Transverse colon (tissue), 4 donors: ENCODE measurements at regions of chr16 and their contacts with region 1.

Region 1: DNA sequence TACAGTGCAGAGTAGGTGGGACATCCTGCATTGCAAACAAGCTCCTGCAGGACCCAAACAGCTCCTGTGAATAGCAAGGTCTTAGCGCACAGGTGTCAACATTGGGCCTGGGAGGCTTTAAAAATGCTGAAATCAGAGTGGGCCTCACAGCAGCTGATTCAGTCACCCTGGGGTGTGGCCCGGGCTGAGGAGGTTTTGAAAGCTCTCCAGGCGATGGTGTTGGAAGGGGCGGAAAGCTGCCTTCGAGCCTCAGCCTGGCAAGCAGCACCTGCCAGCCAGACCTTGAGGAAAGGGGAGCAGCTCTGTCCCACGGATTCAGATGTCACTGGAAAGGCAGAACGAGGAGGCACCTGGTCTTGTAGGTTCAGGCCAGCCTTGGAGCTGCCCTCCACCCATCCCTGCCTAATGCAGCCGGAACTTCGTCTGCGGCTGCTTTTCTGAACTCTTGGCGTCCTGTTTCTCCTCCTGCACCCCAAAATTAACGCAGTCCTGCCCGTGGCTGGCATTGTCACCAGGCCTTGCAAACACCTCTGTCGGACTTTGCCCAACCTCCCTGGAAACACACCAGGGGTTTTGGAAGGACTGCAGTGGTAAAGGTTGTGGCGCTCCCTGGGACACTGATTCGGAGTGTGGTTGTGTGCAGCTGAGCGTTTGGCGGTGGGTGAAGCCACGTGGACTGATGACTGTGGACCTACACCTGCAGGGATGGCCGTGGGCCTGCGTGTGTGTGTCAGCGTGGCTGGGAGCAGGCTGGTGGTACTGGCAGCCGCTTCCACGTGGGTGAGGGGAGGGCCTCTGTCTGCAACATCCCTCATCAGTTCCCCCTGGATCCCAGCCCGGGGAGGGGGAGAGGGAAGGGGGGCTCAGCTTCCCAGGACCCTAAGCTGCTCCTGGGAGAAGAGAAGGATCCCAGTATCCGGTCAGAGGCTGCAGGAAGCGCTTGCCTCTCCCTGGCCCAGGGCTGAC is 3.4 kb downstream of the NECAB2 start:
- DNase-seq: no peak
- H3K4me3 ChIP-seq: no peak overlapping the region
- H3K27ac ChIP-seq: no peak overlapping the region
- H3K4me1 ChIP-seq: no peaks in the 10 kb centered on the region
- H3K27me3 ChIP-seq: peaks cover 16% of the 10 kb centered on the region
- CTCF ChIP-seq: no peak
- EP300 ChIP-seq: no peak
- POLR2A ChIP-seq: no peak

Region 2: GRCh38 chr16:83482545-83483162 is 488.8 kb before region 1 on chr16:
- in situ Hi-C with region 1: no loop called
- intact Hi-C with region 1: no loop called
- DNase-seq: no peak
- H3K4me3 ChIP-seq: no peak overlapping the region
- H3K27ac ChIP-seq: no peak overlapping the region
- H3K4me1 ChIP-seq: no peaks in the 10 kb centered on the region
- H3K27me3 ChIP-seq: no peaks in the 10 kb centered on the region
- CTCF ChIP-seq: no peak
- EP300 ChIP-seq: no peak
- POLR2A ChIP-seq: no peak

Region 3: GRCh38 chr16:84874004-84874435 is 902.6 kb after region 1 on chr16:
- in situ Hi-C with region 1: no loop called
- intact Hi-C with region 1: loop called (anchors 5 kb)
- DNase-seq: no peak
- H3K4me3 ChIP-seq: no peak overlapping the region
- H3K27ac ChIP-seq: no peak overlapping the region
- H3K4me1 ChIP-seq: no peaks in the 10 kb centered on the region
- H3K27me3 ChIP-seq: no peaks in the 10 kb centered on the region
- CTCF ChIP-seq: no peak
- EP300 ChIP-seq: no peak
- POLR2A ChIP-seq: no peak